Right cardiac atrium (tissue), 5 donors: ENCODE measurements at regions of chr6 and their contacts with region 1.

Region 1: GRCh38 chr6:158220786-158221442 is 52.8 kb downstream of the GTF2H5 start:
- DNase-seq: peak; percentile 81 to 92 (median 89)
- ATAC-seq: peak; percentile 93 to 96
- H3K4me3 ChIP-seq: no peak overlapping the region
- H3K27ac ChIP-seq: no peak overlapping the region
- H3K4me1 ChIP-seq: no peaks in the 10 kb centered on the region
- H3K27me3 ChIP-seq: no peaks in the 10 kb centered on the region

Region 2: GRCh38 chr6:158122048-158122447 is 98.9 kb before region 1 on chr6:
- intact Hi-C with region 1: no loop called
- DNase-seq: no peak
- ATAC-seq: no peak
- H3K4me3 ChIP-seq: no peak overlapping the region
- H3K27ac ChIP-seq: no peak overlapping the region
- H3K4me1 ChIP-seq: no peaks in the 10 kb centered on the region
- H3K27me3 ChIP-seq: no peaks in the 10 kb centered on the region

Region 3: DNA sequence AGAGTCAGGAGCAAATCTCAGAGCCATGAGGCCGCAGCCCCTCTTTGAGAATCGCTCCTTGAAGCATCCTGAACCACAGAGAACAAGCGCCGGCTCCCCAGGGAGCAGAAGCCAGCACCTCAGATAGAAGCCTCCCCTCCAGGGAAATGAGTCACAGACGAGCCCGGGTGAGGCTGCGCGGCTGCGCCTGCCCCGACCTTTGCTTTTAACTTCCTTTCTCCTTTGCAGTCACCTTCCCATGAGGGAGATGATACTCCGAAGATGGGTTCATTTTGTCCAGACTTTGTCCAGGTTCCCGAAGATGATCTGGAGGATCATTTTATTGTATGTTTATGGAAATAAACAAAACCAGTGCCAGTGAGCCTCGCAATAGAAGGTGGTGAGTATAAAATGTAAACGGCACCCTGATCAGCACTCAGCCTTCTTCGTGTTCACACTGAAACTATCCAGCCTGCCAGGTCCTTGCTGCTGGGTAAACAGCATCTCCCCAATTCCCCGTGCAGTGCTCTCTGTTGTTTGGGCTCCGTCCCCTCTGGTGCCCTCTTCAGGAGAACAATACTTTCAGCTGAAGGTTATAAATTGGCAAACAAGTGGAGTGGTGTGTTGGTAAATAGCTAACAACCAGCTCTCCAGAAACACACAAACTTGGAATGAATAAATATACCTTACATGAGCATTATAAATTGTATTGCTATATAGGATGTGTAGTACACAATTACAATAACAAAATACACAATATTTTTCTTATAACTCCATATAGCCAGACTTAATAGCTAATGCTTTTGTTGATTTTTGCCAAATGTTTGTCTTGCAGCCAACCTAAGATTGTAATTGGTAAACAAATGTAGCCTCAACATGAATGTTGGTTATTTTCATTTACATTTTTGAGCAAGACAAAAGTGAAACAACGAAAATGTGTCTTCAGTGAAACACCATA is 297.5 kb after region 1 on chr6:
- intact Hi-C with region 1: loop called (anchors 5 to 10 kb)
- DNase-seq: peak in 1 of 3 donors; percentile 67
- ATAC-seq: peak; percentile 69 to 73
- H3K4me3 ChIP-seq: peak overlapping the region; percentile 27
- H3K27ac ChIP-seq: no peak overlapping the region
- H3K4me1 ChIP-seq: no peaks in the 10 kb centered on the region
- H3K27me3 ChIP-seq: no peaks in the 10 kb centered on the region

Region 4: GRCh38 chr6:158599635-158600034 is 378.7 kb after region 1 on chr6:
- intact Hi-C with region 1: loop called in 1 of 4 experiments (anchors 5 kb)
- DNase-seq: no peak
- ATAC-seq: no peak
- H3K4me3 ChIP-seq: no peak overlapping the region
- H3K27ac ChIP-seq: no peak overlapping the region
- H3K4me1 ChIP-seq: no peaks in the 10 kb centered on the region
- H3K27me3 ChIP-seq: no peaks in the 10 kb centered on the region

Region 5: DNA sequence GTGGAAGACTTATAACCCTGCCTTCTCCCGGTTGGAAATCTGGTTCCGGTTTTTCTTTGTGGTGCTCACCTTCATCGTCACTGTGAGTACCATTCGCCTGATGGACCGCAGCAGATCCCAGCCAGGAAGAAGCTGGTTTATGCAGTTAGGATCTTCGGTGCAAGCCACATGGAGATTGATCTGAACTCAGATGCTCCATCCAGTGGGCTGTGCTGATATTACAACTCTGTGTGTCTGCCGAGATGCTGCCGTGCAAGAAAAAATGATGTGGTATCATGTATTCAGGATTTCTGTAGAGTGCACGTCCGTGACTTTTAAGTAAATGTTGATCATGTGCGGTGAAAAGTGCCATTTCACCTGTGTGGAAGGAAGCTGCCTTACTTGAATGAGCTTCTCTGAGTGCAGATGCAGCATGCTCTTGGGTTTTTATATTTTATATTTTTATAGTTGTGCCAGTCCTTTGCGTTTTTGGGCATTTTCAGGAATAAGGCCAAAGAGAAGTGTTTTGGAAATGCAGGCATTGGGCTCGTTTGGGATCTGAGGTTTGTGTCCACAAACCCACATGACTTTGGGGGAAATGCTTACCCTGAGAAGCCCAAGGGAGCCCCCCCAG is 384.5 kb after region 1 on chr6:
- intact Hi-C with region 1: loop called in 2 of 4 experiments (anchors 5 kb)
- DNase-seq: peak in 2 of 3 donors; percentile 58 to 68
- ATAC-seq: peak; percentile 62
- H3K4me3 ChIP-seq: no peak overlapping the region
- H3K27ac ChIP-seq: no peak overlapping the region
- H3K4me1 ChIP-seq: peaks cover 11% of the 10 kb centered on the region
- H3K27me3 ChIP-seq: no peaks in the 10 kb centered on the region

Region 6: DNA sequence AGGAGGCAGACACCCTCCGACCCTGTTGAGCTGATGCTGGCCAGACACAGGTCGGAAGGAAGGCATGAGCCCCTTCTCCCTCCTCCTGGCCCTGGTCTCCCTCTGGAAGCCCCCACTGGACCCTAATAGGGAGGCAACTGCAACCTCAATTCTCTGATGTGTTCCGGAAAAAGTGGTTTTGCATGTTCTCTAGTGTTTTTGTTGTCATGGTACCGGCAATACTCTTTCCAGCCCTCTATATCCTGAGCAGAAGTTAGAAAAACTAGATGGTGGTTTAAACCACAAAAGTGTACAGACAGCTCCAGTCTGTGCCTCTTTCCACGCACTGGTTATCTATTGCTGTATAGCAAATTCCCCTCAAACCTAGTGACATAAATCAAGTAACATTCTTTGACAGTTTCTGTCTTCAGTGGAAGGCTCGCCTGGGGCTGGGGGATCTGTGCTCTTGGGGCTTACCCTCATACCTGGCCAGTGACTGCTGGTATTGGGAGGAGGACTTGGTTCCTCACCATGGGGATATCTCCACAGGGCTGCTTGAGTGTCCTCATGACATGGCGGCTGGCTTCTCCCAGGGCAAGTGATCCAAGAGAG is 466.0 kb after region 1 on chr6:
- intact Hi-C with region 1: loop called in 3 of 4 experiments (anchors 5 to 10 kb)
- DNase-seq: no peak
- ATAC-seq: no peak
- H3K4me3 ChIP-seq: no peak overlapping the region
- H3K27ac ChIP-seq: no peak overlapping the region
- H3K4me1 ChIP-seq: no peaks in the 10 kb centered on the region
- H3K27me3 ChIP-seq: no peaks in the 10 kb centered on the region

Region 7: DNA sequence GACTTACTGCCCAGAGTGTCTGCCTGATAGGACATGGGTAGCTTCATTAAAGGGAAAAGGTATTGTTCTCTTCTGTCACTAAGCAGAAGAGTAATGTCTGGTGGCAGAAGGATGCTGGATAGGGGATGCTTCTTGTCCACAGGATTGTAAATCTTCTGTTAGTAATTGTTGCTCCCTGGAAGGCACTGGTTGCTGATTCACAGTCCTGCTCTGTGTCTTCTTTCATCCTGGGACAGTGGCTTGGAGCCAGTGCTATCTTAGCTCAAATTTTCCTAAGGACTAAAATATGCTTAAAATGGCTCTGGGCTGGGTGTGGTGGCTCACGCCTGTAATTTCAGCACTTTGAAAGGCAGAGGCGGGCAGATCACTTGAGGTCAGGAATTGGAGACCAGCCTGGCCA is 476.9 kb after region 1 on chr6:
- intact Hi-C with region 1: loop called in 2 of 4 experiments (anchors 5 to 10 kb)
- DNase-seq: peak in 1 of 3 donors; percentile 22
- ATAC-seq: peak in 1 of 2 donors; percentile 87
- H3K4me3 ChIP-seq: no peak overlapping the region
- H3K27ac ChIP-seq: no peak overlapping the region
- H3K4me1 ChIP-seq: no peaks in the 10 kb centered on the region
- H3K27me3 ChIP-seq: no peaks in the 10 kb centered on the region